ENCODE measurements at regions of chr11 and their contacts with region 1.

Region 1: GRCh38 chr11:14300661-14301304 is 58.2 kb downstream of the RRAS2 start:
- DNase-seq: peak; percentile 69 to 75
- ATAC-seq: peak; percentile 97 to 98
- H3K4me3 ChIP-seq: no peak overlapping the region
- H3K27ac ChIP-seq: peak overlapping the region in 1 of 2 experiments; percentile 65; a peak in 3 of 6 replicates
- H3K4me1 ChIP-seq: peaks cover 7% of the 10 kb centered on the region; the same call in 2 of the 3 replicates
- CTCF ChIP-seq: peak; percentile 91
- EP300 ChIP-seq: no peak
- POLR2A ChIP-seq: no peak
- RAD21 ChIP-seq: peak; percentile 92 to 96

Region 2: GRCh38 chr11:14320020-14320419 is 19.2 kb after region 1 on chr11:
- CTCF ChIA-PET with region 1: interaction called, 29 read pairs
- POLR2A ChIA-PET with region 1: no interaction called
- DNase-seq: no peak
- ATAC-seq: no peak
- H3K4me3 ChIP-seq: no peak overlapping the region
- H3K27ac ChIP-seq: no peak overlapping the region; a peak in 1 of 6 replicates
- H3K4me1 ChIP-seq: peaks cover 29% of the 10 kb centered on the region
- CTCF ChIP-seq: no peak
- EP300 ChIP-seq: no peak
- POLR2A ChIP-seq: no peak
- RAD21 ChIP-seq: no peak

Region 3: GRCh38 chr11:14346303-14346955 is 45.6 kb after region 1 on chr11:
- CTCF ChIA-PET with region 1: interaction called, 11 read pairs
- POLR2A ChIA-PET with region 1: no interaction called
- DNase-seq: no peak
- ATAC-seq: no peak
- H3K4me3 ChIP-seq: no peak overlapping the region
- H3K27ac ChIP-seq: no peak overlapping the region
- H3K4me1 ChIP-seq: no peaks in the 10 kb centered on the region
- CTCF ChIP-seq: no peak
- EP300 ChIP-seq: no peak
- POLR2A ChIP-seq: no peak
- RAD21 ChIP-seq: no peak

Region 4: GRCh38 chr11:14380947-14381561 is 80.3 kb after region 1 on chr11:
- CTCF ChIA-PET with region 1: interaction called, 11 read pairs
- POLR2A ChIA-PET with region 1: no interaction called
- DNase-seq: peak; percentile 58 to 72
- ATAC-seq: peak; percentile 95 to 96
- H3K4me3 ChIP-seq: peak overlapping the region; percentile 50
- H3K27ac ChIP-seq: peak overlapping the region; percentile 83 to 95
- H3K4me1 ChIP-seq: peaks cover 21% of the 10 kb centered on the region
- CTCF ChIP-seq: no peak
- EP300 ChIP-seq: no peak
- POLR2A ChIP-seq: peak; percentile 76
- RAD21 ChIP-seq: no peak; a peak in 1 of 5 replicates

Region 5: DNA sequence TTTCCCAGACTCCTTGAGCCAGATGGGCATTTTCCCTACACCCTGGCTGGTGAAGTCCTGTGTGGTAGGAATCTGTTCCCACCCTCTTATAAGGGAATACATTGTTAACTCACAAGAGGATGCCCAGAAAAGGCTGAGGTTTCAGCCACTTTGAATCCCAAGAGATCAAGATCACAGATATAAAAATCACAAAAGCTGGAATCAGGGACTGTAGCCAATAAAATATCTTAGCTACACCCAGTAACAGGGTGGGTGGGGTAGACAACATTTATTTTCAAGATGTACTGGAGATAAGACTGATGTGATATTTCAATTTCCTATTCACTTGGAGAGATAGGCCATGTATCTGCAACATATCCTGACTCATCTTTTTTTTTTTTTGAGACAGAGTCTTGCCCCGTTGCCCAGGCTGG is 148.5 kb after region 1 on chr11:
- CTCF ChIA-PET with region 1: interaction called, 258 read pairs
- POLR2A ChIA-PET with region 1: no interaction called
- DNase-seq: peak in 1 of 2 experiments; percentile 47
- ATAC-seq: peak in 1 of 2 experiments; percentile 47; a peak in 3 of 6 replicates
- H3K4me3 ChIP-seq: no peak overlapping the region
- H3K27ac ChIP-seq: peak overlapping the region in 1 of 2 experiments; percentile 55; a peak in 3 of 6 replicates
- H3K4me1 ChIP-seq: peaks cover 48% of the 10 kb centered on the region
- CTCF ChIP-seq: no peak
- EP300 ChIP-seq: no peak
- POLR2A ChIP-seq: no peak
- RAD21 ChIP-seq: no peak

Measured in A549 (cell line).